HEK293 (cell line): ENCODE measurements at regions of chr1 and their contacts with region 1.

Region 1: GRCh38 chr1:27772933-27773825 is at the start of gene STX12:
- H3K4me3 ChIP-seq: peak within 1 kb of the TSS; percentile 68
- H3K27ac ChIP-seq: peak within 1 kb of the TSS; percentile 58
- H3K4me1 ChIP-seq: no peaks in the 10 kb centered on the region
- CTCF ChIP-seq: no peak

Region 2: DNA sequence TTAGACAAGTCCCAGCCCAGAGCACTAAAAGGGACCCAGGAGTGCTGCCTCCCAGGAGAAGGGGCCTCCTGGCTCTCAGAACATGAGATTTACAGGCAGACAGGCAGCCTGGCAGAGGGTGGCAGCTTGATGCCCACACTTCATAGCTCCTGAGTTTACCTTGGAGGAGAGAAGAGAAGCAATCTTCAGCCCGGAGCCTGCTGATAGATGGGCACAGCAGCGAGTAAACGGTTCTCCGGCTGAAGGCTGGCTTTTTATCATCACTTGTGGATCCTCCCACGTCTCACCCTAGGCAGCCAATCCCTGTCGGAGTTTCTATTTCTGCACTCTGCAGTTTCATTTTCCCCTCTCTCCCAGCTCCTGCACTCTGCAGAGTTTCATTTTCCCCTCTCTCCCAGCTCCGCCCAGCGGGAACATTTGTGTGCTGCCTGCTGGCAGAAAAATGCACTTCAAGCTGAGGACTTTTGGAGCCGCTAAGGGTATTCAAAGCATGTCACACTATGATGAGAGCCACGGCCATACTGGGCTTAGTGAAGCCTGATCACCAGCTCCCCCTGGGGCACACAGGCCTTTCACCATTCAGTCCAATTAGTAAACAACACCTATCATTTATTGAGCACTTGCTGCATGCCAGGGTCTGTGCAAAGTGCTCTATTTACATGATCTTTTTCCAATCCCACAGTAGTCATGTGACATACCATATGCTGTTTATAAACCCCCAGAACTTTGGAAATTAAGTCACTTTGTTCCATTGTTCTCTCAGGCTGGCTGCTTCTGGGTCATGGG is 101.0 kb before region 1 on chr1 and contains the start of gene IFI6:
- CTCF ChIA-PET with region 1: interaction called, 5 read pairs
- POLR2A ChIA-PET with region 1: interaction called, 13 read pairs
- H3K4me3 ChIP-seq: peak within 1 kb of the TSS; percentile 39
- H3K27ac ChIP-seq: peak within 1 kb of the TSS; percentile 57
- H3K4me1 ChIP-seq: no peaks in the 10 kb centered on the region
- CTCF ChIP-seq: peak; percentile 77

Region 3: GRCh38 chr1:27725374-27726173 is 47.6 kb before region 1 on chr1 and contains the start of gene FAM76A:
- CTCF ChIA-PET with region 1: interaction called, 7 read pairs
- POLR2A ChIA-PET with region 1: interaction called, 73 read pairs
- H3K4me3 ChIP-seq: peak within 1 kb of the TSS; percentile 73
- H3K27ac ChIP-seq: peak within 1 kb of the TSS; percentile 77
- H3K4me1 ChIP-seq: peaks cover 7% of the 10 kb centered on the region
- CTCF ChIP-seq: peak; percentile 98

Region 4: GRCh38 chr1:27744556-27744955 is 28.6 kb before region 1 on chr1:
- CTCF ChIA-PET with region 1: no interaction called
- POLR2A ChIA-PET with region 1: no interaction called
- H3K4me3 ChIP-seq: no peak overlapping the region
- H3K27ac ChIP-seq: no peak overlapping the region
- H3K4me1 ChIP-seq: no peaks in the 10 kb centered on the region
- CTCF ChIP-seq: no peak

Region 5: GRCh38 chr1:27760426-27760825 is 12.8 kb before region 1 on chr1:
- CTCF ChIA-PET with region 1: interaction called, 3 read pairs
- POLR2A ChIA-PET with region 1: interaction called, 17 read pairs
- H3K4me3 ChIP-seq: no peak overlapping the region
- H3K27ac ChIP-seq: no peak overlapping the region
- H3K4me1 ChIP-seq: no peaks in the 10 kb centered on the region
- CTCF ChIP-seq: no peak

Region 6: GRCh38 chr1:27789540-27790041 is 16.4 kb after region 1 on chr1:
- CTCF ChIA-PET with region 1: interaction called, 3 read pairs
- POLR2A ChIA-PET with region 1: interaction called, 28 read pairs
- H3K4me3 ChIP-seq: no peak overlapping the region
- H3K27ac ChIP-seq: no peak overlapping the region
- H3K4me1 ChIP-seq: peaks cover 5% of the 10 kb centered on the region; the same call in 1 of the 2 replicates
- CTCF ChIP-seq: no peak

Region 7: GRCh38 chr1:27830621-27831424 is 57.6 kb after region 1 on chr1 and contains the start of gene PPP1R8:
- CTCF ChIA-PET with region 1: interaction called, 4 read pairs
- POLR2A ChIA-PET with region 1: interaction called, 51 read pairs
- H3K4me3 ChIP-seq: peak within 1 kb of the TSS; percentile 86
- H3K27ac ChIP-seq: peak within 1 kb of the TSS; percentile 70
- H3K4me1 ChIP-seq: 0 out of 2 replicates have a peak, but pooled peaks cover 2% of the 10 kb centered on the region
- CTCF ChIP-seq: no peak

Region 8: GRCh38 chr1:29064064-29064463 is 1290.9 kb after region 1 on chr1:
- CTCF ChIA-PET with region 1: no interaction called
- POLR2A ChIA-PET with region 1: interaction called, 11 read pairs
- H3K4me3 ChIP-seq: no peak overlapping the region
- H3K27ac ChIP-seq: no peak overlapping the region
- H3K4me1 ChIP-seq: no peaks in the 10 kb centered on the region
- CTCF ChIP-seq: no peak